Cardiac septum (tissue), 1 donor: ENCODE measurements at regions of chr2 and their contacts with region 1.

Region 1: GRCh38 chr2:172864182-172864581 is 128.5 kb downstream of the RAPGEF4 start:
- DNase-seq: no peak

Region 2: DNA sequence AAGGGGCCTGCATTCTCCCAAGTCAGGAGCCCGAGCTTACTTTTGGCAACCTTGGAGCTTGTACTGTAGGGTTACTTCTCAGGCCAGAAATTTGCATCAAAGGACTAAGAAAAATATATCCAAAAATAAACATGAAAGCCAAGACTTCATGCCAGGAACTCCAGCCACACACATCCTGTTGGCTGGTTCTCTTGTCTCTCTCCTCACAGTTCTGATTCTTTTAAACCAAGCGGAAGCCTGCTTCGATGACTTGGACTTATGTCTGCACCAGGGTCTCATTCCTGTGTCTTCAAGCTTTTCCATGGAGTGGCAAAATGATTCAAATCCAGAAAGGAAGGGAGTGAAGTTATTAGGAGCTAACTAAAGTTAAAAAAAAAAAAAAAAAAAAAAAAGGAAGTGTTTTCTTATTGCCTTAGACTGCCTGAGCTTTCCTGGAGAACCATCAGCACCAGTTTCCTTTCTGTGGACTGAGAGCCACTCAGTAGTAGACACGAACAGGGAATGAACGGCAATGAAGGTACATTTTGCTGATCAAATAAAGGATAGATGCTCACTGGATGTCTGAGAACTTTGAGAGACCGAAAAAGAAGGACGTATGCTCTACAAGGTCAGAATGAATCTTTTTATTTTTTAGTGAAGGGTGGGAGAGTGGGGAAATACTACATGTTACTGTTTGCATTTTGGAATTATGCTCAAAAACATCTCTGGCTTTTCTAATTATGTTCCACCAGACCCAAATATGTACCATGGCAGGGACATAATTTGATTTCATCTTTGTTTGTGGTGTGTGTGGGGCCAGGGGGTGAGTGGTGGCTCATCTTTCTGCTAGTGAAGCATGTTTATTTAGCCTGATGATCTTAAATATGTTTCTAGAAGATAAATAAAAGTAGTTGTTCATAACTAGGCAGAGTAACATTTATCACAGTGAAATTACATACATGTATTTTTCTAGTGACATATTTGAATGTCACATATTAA is 42.5 kb before region 1 on chr2:
- intact Hi-C with region 1: loop called (anchors 1 kb)
- DNase-seq: no peak

Region 3: DNA sequence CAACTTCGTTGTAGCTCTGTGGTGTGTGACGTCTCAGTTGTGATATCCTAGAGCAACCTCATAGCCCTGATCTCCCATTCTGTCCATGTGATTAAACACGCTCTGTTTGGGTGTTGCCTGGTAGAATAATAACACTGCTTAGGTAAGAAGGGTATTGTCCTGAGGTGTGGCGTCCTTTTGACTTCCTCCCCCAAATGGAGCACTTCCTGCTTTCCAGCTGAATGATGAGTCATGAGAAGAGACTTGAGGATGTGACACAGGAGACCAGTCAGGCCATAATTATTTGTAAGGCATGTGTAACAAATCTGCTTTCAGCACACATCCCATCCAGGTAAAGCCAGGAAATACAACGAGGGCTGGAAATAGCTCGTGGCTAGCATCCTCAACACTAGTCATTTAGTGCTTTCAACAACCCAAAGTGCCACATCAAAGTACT is 27.8 kb before region 1 on chr2:
- intact Hi-C with region 1: loop called (anchors 2 kb)
- DNase-seq: no peak

Region 4: GRCh38 chr2:172931918-172932520 is 67.8 kb after region 1 on chr2:
- intact Hi-C with region 1: loop called (anchors 1 kb)
- DNase-seq: no peak

Region 5: DNA sequence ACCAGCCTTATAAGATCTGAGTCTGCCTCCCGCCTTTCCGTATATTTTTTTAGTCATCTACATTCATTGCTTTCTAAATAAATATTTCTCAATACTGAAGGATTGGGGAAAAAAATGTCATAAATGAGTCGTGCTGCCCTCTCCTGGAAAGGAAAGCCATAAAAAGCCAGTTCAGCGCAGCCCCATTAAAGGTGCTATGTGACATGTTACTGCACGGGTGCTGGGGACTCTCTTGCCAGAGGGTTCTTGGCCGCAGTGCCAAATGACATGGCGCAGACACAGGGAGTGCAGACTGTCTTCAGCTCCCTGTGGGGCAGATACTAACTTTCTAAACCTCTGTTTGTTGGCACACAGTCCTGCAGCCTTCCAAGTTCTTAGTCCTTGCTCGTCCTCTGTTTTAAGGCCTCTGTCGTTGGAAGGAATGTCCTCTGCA is 157.8 kb after region 1 on chr2:
- intact Hi-C with region 1: loop called (anchors 5 kb)
- DNase-seq: peak; percentile 79